MCF 10A (cell line): ENCODE measurements at regions of chr15 and their contacts with region 1.

Region 1: DNA sequence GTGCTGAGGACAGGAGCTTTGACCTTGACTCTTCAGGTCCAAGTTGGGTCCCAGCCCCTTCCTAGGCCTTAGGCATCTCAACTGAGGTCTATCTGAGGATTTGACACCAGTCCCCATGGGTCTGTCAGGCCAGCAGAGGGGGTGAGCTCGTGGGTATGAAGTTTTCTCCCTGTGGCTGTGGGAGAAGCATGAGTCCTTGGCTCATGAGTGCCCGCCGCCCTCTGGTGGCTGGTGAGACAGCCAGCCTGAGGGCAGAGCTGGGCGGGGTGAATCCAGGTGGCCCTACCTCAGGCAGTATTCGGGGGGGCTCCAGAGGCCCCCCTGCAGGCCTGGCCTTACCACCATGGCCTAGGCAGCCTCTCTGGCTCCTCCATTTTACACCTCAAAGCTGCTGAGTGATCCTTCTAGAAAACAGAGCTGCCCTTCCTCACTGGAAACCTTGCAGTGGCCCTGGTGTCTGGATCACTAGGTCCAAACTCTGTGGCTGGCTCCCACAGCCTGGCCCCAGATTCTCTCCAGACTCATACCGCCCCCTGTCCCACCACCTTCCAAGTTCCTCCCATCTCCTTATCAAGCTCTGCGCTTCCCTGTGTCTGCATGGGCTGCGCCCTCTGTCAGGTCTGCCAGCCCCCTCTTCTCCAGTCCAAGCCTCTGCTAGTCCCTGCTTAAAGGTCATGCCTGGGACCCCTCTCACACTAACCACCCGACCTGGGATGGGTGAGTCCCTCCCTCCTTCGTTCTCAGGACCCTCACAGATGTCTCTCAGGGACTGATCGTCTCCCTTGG is 16.1 kb downstream of the SH2D7 start:
- DNase-seq: peak; percentile 84
- H3K4me3 Mint-ChIP-seq: no peak overlapping the region
- H3K27ac Mint-ChIP-seq: no peak overlapping the region
- H3K4me1 Mint-ChIP-seq: no peaks in the 10 kb centered on the region
- H3K27me3 Mint-ChIP-seq: no peaks in the 10 kb centered on the region
- CTCF ChIP-seq: peak; percentile 90

Region 2: GRCh38 chr15:77659350-77660321 is 448.9 kb before region 1 on chr15:
- CTCF ChIA-PET with region 1: no interaction called
- POLR2A ChIA-PET with region 1: no interaction called
- intact Hi-C with region 1: no loop called
- DNase-seq: peak; percentile 69
- H3K4me3 Mint-ChIP-seq: no peak overlapping the region
- H3K27ac Mint-ChIP-seq: no peak overlapping the region
- H3K4me1 Mint-ChIP-seq: no peaks in the 10 kb centered on the region
- H3K27me3 Mint-ChIP-seq: peaks cover 53% of the 10 kb centered on the region
- CTCF ChIP-seq: peak; percentile 29

Region 3: DNA sequence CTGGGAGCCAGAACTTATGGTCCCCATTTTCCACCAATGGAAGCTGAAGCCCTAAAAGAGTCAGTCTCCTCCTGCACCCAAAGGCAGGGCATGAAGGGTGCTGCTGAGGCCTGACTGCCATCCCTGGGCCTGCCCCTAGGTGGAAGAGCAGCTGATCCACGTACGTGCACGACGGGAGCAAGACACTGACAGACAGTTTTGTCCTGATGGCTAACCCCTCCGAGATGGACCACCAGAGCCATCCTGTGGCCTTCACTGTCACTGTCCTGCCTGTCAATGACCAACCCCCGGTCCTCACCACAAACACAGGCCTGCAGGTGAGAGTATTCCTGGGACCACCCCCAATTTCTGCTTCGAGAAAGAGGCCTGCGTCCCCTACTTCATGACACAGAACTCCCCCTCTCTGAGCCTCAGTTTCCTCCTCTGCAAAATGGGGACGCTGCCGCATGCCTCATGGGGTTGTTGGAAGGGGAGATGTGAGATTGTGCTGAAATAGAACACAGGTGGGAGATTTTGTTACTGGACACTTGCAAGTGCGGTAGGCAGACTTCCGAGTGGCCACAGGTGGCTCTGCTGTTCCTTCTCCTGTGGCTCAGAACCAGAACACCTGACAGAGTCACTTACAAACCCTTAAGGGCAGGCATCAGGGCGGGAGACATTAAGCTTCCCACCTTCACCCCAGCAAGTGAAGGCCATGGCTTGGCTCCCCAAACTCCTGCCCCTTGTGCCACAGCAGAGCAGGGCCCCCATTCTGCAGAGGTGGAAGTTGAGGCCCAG is 206.3 kb before region 1 on chr15:
- CTCF ChIA-PET with region 1: interaction called, 4 read pairs
- POLR2A ChIA-PET with region 1: no interaction called
- intact Hi-C with region 1: loop called (anchors 2 kb)
- DNase-seq: no peak
- H3K4me3 Mint-ChIP-seq: no peak overlapping the region
- H3K27ac Mint-ChIP-seq: no peak overlapping the region
- H3K4me1 Mint-ChIP-seq: no peaks in the 10 kb centered on the region
- H3K27me3 Mint-ChIP-seq: peaks cover 14% of the 10 kb centered on the region
- CTCF ChIP-seq: peak; percentile 6

Region 4: GRCh38 chr15:77966540-77967290 is 141.8 kb before region 1 on chr15:
- CTCF ChIA-PET with region 1: interaction called, 289 read pairs
- POLR2A ChIA-PET with region 1: interaction called, 4 read pairs
- intact Hi-C with region 1: loop called (anchors 1 kb)
- DNase-seq: peak; percentile 61
- H3K4me3 Mint-ChIP-seq: no peak overlapping the region
- H3K27ac Mint-ChIP-seq: no peak overlapping the region
- H3K4me1 Mint-ChIP-seq: peaks cover 3% of the 10 kb centered on the region
- H3K27me3 Mint-ChIP-seq: peaks cover 20% of the 10 kb centered on the region
- CTCF ChIP-seq: peak; percentile 91

Region 5: GRCh38 chr15:78007911-78008886 is 100.3 kb before region 1 on chr15:
- CTCF ChIA-PET with region 1: interaction called, 14 read pairs
- POLR2A ChIA-PET with region 1: interaction called, 3 read pairs
- intact Hi-C with region 1: no loop called
- DNase-seq: peak; percentile 89
- H3K4me3 Mint-ChIP-seq: peak overlapping the region; percentile 12
- H3K27ac Mint-ChIP-seq: peak overlapping the region; percentile 90
- H3K4me1 Mint-ChIP-seq: peaks cover 60% of the 10 kb centered on the region
- H3K27me3 Mint-ChIP-seq: no peaks in the 10 kb centered on the region
- CTCF ChIP-seq: no peak

Region 6: GRCh38 chr15:78093242-78094020 is 15.1 kb before region 1 on chr15:
- CTCF ChIA-PET with region 1: interaction called, 16 read pairs
- POLR2A ChIA-PET with region 1: interaction called, 3 read pairs
- intact Hi-C with region 1: no loop called
- DNase-seq: no peak
- H3K4me3 Mint-ChIP-seq: no peak overlapping the region
- H3K27ac Mint-ChIP-seq: no peak overlapping the region
- H3K4me1 Mint-ChIP-seq: no peaks in the 10 kb centered on the region
- H3K27me3 Mint-ChIP-seq: no peaks in the 10 kb centered on the region
- CTCF ChIP-seq: no peak

Region 7: DNA sequence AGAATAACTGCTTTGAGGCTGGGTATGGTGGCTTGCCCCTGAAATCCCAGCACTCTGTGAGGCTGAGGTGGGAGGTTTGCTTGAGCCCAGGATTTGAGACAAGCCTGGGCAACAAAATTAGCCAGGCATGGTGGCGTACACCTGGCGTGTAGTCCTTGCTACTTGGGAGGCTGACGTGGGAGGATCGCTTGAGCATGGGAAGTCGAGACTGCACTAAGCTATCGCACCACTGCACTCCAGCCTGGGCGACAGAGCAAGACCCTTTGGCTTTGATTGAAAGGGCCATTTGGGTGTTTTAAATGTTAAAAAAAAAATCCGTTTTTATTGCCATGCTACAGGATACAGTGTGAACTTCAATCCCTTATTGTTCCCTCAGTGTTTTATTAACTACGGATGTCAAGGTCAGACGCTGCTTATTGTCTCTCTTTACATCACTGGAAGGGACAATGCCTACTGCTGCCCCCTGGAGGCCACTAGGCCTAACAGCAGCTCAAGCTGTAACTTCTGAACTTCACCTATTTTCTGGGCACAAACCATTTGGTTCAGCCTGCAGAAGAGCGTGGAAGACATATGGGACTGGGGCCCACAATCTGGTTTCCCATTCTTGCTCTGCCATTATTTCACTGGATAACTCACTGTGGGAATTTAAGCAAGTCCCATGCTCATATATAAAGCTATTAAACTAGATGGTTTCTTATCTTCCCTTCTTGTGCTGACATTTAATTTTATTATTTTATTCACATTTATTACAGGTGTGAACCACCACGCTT is 314.3 kb after region 1 on chr15:
- CTCF ChIA-PET with region 1: interaction called, 6 read pairs
- POLR2A ChIA-PET with region 1: interaction called, 3 read pairs
- intact Hi-C with region 1: loop called (anchors 2 kb)
- DNase-seq: peak; percentile 61
- H3K4me3 Mint-ChIP-seq: no peak overlapping the region
- H3K27ac Mint-ChIP-seq: no peak overlapping the region
- H3K4me1 Mint-ChIP-seq: no peaks in the 10 kb centered on the region
- H3K27me3 Mint-ChIP-seq: peaks cover 26% of the 10 kb centered on the region
- CTCF ChIP-seq: peak; percentile 73